AG04450 (cell line): ENCODE measurements at regions of chr17 and their contacts with region 1.

Region 1: GRCh38 chr17:60613325-60613724 is 13.3 kb downstream of the PPM1D start:
- DNase-seq: no peak
- H3K4me3 ChIP-seq: no peak overlapping the region
- H3K27ac ChIP-seq: no peak overlapping the region
- H3K27me3 ChIP-seq: no peaks in the 10 kb centered on the region
- CTCF ChIP-seq: no peak

Region 2: DNA sequence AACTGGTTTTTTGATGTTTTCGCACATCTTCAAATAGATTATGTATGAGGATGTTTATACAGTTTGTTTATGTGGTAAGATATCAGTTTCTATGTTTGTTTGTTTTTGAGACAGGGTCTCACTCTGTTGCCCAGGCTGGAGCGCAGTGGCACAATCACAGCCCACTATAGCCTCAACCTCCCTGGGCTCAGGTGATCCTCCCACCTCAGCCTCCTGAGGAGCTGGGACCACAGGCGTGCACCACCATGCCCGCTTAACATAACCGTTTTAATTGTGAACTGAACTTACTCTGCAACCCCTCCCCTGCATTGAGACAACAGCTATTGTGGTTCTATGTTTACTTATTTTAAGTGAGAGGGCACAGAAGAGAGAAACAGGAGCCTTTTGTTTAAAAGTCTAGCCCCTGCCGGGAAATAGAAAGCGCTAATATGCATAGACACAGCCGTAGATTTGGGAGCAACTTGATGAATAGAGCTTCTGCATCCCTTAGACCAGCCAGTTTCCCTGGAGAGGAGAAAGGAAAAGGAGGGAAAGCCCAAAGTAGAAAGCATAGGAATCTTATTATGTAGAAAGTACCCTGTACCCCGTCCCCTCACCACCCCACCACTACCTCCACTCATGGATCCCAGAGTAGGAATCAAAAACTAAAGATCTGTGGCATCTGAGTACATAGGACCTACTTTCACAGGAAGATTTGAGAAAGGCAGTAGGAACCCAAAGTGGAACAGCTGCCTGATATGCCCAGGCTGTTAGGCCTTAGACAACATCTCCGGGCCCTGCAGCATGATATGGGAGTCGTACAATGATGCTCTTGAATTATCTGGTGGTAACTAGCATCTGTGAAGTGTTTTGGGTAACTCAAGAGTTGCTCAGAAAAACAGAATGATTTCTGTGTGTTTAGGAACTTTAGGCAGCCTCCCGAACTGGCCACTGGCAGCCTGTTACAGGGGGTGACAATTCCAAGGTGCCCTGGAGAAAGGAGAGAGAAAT is 67.6 kb before region 1 on chr17:
- CTCF ChIA-PET with region 1: no interaction called
- POLR2A ChIA-PET with region 1: interaction called, 11 read pairs
- DNase-seq: no peak
- H3K4me3 ChIP-seq: no peak overlapping the region
- H3K27ac ChIP-seq: no peak overlapping the region
- H3K27me3 ChIP-seq: no peaks in the 10 kb centered on the region
- CTCF ChIP-seq: no peak

Region 3: DNA sequence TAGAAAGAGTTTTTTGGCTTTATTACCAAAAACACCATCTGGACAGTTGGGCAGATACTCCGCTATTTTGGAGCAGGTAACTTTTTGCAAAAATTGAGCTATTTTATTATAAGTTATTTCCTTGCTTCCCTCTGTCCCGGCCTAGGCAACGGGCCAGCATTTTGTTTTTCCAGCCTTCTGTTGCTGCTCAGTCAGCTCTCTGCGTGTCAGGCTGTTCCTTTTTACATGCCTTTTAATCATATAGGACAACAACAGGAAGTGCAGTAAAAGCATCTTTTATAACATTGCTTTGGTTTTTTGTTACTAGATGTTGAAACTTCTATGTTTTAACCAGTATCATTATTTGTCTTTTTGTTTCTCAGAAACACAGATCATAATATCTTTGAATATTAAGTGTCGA is 17.0 kb after region 1 on chr17:
- CTCF ChIA-PET with region 1: no interaction called
- POLR2A ChIA-PET with region 1: no interaction called
- DNase-seq: no peak
- H3K4me3 ChIP-seq: no peak overlapping the region
- H3K27ac ChIP-seq: no peak overlapping the region
- H3K27me3 ChIP-seq: no peaks in the 10 kb centered on the region
- CTCF ChIP-seq: no peak